Caco-2 (cell line): ENCODE measurements at regions of chr4 and their contacts with region 1.

Region 1: GRCh38 chr4:110854021-110854678 is 231.3 kb upstream of the PITX2 start:
- DNase-seq: peak in 1 of 2 experiments; percentile 32
- H3K4me3 ChIP-seq: no peak overlapping the region
- H3K4me3 Mint-ChIP-seq: peak overlapping the region; percentile 28
- H3K27ac Mint-ChIP-seq: no peak overlapping the region
- H3K4me1 ChIP-seq: peaks cover 30% of the 10 kb centered on the region
- H3K4me1 Mint-ChIP-seq: peaks cover 18% of the 10 kb centered on the region
- H3K27me3 ChIP-seq: no peaks in the 10 kb centered on the region
- H3K27me3 Mint-ChIP-seq: no peaks in the 10 kb centered on the region
- CTCF ChIP-seq: no peak

Region 2: DNA sequence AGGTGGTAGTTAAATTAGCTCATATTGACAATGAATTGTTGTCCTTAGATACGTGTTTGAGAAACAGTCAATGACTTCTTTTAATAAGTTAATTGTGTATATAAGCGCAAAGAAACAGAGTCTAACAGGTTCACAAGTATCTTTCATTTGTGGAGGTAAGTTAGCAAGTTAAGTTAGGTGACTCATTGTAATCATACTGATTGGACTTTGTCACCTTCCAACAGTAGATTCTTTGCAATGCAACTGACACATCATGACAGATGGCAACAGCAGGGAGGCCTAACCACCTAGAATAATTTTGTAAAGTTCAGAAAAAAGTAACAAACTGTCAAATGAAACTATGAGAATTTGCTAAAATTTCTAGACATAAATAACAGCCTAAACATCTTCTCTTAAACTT is 23.7 kb before region 1 on chr4:
- CTCF ChIA-PET with region 1: no interaction called
- POLR2A ChIA-PET with region 1: no interaction called
- intact Hi-C with region 1: loop called (anchors 2 kb)
- DNase-seq: peak in 1 of 2 experiments; percentile 21
- H3K4me3 ChIP-seq: no peak overlapping the region
- H3K4me3 Mint-ChIP-seq: no peak overlapping the region
- H3K27ac Mint-ChIP-seq: no peak overlapping the region
- H3K4me1 ChIP-seq: peaks cover 23% of the 10 kb centered on the region
- H3K4me1 Mint-ChIP-seq: peaks cover 9% of the 10 kb centered on the region
- H3K27me3 ChIP-seq: no peaks in the 10 kb centered on the region
- H3K27me3 Mint-ChIP-seq: no peaks in the 10 kb centered on the region
- CTCF ChIP-seq: no peak

Region 3: DNA sequence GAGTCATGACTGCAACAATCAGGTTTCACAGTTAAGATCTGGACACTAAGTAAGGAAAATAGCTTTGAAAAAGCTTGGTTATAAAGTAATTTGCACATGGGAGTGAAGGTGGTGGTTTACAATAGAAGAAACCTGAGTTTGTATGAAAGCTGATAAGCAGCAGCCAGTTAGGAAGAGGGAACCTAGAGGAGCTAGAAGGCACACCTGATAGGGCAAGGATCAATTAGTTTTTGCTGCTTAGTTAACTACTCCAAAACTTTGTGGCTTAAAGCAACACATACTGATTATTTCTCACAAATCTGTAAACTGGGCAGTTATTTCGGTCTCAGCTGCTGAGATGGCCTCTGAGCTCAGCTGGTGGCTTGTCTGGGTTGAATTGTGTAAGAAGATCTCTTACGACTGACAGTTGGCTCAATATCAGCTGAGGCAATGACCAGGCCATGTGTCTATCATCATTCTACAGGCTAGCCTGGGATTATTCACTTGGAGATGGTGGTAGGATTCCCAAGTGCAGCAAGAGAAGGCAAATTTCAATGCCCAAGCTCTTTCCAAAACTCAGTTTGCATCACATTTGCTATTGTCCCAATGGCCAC is 23.7 kb after region 1 on chr4:
- CTCF ChIA-PET with region 1: no interaction called
- POLR2A ChIA-PET with region 1: no interaction called
- intact Hi-C with region 1: loop called (anchors 2 kb)
- DNase-seq: no peak
- H3K4me3 ChIP-seq: no peak overlapping the region
- H3K4me3 Mint-ChIP-seq: peak overlapping the region; percentile 39
- H3K27ac Mint-ChIP-seq: peak overlapping the region; percentile 31
- H3K4me1 ChIP-seq: peaks cover 19% of the 10 kb centered on the region
- H3K4me1 Mint-ChIP-seq: peaks cover 31% of the 10 kb centered on the region
- H3K27me3 ChIP-seq: no peaks in the 10 kb centered on the region
- H3K27me3 Mint-ChIP-seq: no peaks in the 10 kb centered on the region
- CTCF ChIP-seq: no peak

Region 4: GRCh38 chr4:110926841-110927400 is 72.8 kb after region 1 on chr4:
- CTCF ChIA-PET with region 1: no interaction called
- POLR2A ChIA-PET with region 1: no interaction called
- intact Hi-C with region 1: loop called (anchors 1 kb)
- DNase-seq: peak; percentile 75 to 79
- H3K4me3 ChIP-seq: no peak overlapping the region
- H3K4me3 Mint-ChIP-seq: peak overlapping the region; percentile 39
- H3K27ac Mint-ChIP-seq: peak overlapping the region; percentile 23
- H3K4me1 ChIP-seq: peaks cover 42% of the 10 kb centered on the region
- H3K4me1 Mint-ChIP-seq: peaks cover 31% of the 10 kb centered on the region
- H3K27me3 ChIP-seq: no peaks in the 10 kb centered on the region
- H3K27me3 Mint-ChIP-seq: no peaks in the 10 kb centered on the region
- CTCF ChIP-seq: no peak

Region 5: DNA sequence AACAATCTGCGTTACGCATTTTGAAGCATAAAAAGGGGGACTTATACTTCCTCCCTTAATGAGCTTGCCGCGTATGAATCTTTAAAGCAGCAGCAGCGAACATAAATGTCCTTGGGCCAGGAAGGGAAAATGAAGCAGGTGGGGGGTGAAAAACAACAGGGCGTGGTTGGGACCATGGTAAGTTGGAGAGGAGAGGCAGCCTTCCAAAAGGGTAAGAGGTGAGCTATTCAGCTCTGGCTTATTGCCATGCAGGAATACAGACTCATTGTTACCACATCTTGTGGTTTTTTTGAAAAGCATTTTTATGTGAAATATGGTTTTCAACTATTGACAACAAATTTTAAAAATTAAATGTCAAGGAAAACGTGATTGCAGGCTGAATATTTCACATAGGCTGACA is 580.4 kb after region 1 on chr4:
- CTCF ChIA-PET with region 1: no interaction called
- POLR2A ChIA-PET with region 1: no interaction called
- intact Hi-C with region 1: no loop called
- DNase-seq: no peak
- H3K4me3 ChIP-seq: no peak overlapping the region
- H3K4me3 Mint-ChIP-seq: no peak overlapping the region
- H3K27ac Mint-ChIP-seq: no peak overlapping the region
- H3K4me1 ChIP-seq: no peaks in the 10 kb centered on the region
- H3K4me1 Mint-ChIP-seq: no peaks in the 10 kb centered on the region
- H3K27me3 ChIP-seq: no peaks in the 10 kb centered on the region
- H3K27me3 Mint-ChIP-seq: peaks cover 2% of the 10 kb centered on the region
- CTCF ChIP-seq: no peak